Kidney (tissue), 22 donors: ENCODE measurements at regions of chr15 and their contacts with region 1.

Region 1: DNA sequence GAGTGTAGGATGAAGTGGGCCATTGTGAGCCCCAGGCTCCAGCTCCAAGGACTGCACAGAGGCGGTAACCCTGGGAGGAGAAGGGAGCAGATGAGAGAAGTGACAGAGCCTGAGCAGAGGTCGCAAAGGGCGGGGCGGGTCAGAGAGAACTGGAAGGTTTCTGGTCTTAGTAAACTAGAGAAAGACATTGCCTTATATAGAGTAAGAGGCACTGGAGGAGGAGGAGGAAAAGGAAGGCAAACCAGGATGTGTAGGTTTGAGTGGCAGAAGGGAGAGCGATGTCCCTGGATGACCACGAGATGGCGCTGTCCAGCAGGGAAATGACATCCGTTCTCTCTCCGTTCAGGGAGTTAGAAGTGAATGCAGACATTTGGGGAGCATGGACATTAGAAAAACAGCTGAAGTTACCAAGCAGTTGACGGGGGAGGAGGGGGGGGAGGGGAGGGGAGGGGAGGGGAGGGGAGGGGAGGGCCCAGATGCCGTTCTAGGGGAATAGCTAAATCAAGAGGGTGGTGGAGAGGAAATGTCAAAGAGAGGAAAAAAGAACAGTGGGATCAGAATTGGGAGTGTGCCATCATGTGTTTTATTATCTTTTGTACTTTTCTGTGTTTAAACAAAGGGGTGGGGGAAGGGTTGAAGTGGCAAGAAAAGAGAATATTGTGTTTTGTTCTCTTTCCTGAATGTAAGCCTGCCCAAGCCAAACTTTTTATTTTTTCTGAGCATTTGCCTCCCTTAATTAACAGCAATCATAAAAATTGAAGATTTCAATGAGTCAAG is 48.8 kb downstream of the STARD5 start:
- DNase-seq: peak in 4 of 5 donors; percentile 62 to 94 (median 80)
- H3K4me3 ChIP-seq: no peak overlapping the region
- H3K27ac ChIP-seq: no peak overlapping the region
- H3K4me1 ChIP-seq: no peaks in the 10 kb centered on the region
- H3K27me3 ChIP-seq: no peaks in the 10 kb centered on the region
- CTCF ChIP-seq: peak; percentile 97

Region 2: DNA sequence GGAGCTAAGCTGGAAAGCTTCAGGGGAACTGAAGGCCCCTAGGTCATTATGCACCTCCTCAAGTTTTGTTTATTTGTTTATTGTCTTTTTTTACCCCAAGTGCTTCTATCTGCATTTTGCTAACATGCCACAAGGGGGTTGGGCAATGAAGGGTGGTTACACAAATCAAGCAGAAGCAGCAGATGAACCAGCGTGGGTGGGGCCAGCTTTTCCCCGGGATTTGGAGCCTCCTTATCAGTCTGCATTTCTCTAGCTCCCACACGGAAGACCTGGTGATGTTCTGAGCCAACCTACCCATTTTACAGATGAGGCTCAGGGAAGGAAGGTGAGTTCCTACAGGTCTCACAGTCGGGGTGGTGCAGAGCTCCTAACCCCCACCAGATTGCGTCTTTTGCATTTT is 82.1 kb after region 1 on chr15:
- intact Hi-C with region 1: no loop called
- DNase-seq: no peak
- H3K4me3 ChIP-seq: no peak overlapping the region
- H3K27ac ChIP-seq: no peak overlapping the region
- H3K4me1 ChIP-seq: no peaks in the 10 kb centered on the region
- H3K27me3 ChIP-seq: no peaks in the 10 kb centered on the region
- CTCF ChIP-seq: no peak

Region 3: GRCh38 chr15:81400640-81401236 is 125.6 kb after region 1 on chr15:
- intact Hi-C with region 1: loop called (anchors 5 kb)
- DNase-seq: peak in 2 of 5 donors; percentile 54 to 66
- H3K4me3 ChIP-seq: no peak overlapping the region
- H3K27ac ChIP-seq: no peak overlapping the region
- H3K4me1 ChIP-seq: no peaks in the 10 kb centered on the region
- H3K27me3 ChIP-seq: no peaks in the 10 kb centered on the region
- CTCF ChIP-seq: peak; percentile 75